Mammary epithelial cell (primary cell): ENCODE measurements at regions of chr3 and their contacts with region 1.

Region 1: DNA sequence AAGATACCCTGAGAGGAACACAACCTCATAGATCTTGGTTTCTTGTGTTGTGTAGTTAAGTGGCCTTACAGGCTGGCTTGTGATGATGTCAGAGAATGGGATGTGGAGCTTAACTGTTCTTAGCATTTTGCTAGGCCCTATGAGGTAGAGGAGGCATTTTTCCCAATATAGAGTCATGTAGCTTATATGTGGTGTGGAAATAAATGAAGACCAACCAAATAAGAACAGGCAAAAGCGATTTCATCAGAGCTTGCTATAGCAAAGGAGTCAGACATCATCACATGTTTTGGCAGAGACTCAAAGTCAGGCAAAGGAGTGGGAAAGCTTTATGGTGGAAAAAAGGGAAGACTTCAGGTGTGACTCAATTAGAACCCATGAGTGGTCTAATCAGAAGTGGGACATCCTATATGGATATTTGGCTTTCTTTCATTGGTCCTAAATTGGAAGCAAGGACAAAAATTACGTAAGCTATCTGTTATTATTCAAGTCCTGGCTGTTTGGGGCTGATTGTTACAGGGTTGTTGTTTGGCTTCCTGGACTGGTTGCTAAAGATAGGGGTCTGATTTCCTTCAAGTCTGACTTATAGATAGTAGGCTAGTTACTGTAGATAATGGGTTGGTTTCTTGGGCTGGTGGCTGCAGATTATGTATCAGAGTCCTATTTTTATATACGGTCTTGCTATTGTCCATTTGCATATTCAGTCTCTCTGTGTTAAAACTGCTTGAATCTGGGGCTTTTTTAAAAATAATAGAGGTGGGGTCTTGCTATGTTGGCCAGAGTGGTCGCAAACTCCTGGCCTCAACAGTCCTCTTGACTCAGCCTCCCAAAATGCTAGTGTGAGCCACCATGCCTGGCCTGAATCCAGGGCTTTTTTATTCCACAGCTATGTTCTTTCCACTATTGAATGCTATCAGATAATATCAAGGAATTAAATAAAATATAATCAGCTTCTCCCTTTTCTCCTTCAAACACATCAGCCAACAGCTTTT is 30.3 kb upstream of the SETD2 start:
- DNase-seq: peak; percentile 1
- H3K4me3 ChIP-seq: no peak overlapping the region
- H3K27ac ChIP-seq: no peak overlapping the region
- H3K4me1 ChIP-seq: no peaks in the 10 kb centered on the region
- H3K27me3 ChIP-seq: no peaks in the 10 kb centered on the region
- CTCF ChIP-seq: no peak

Region 2: GRCh38 chr3:47108546-47108945 is 85.6 kb before region 1 on chr3:
- CTCF ChIA-PET with region 1: no interaction called
- dilution Hi-C with region 1: loop called (anchors 5 kb)
- in situ Hi-C with region 1: no loop called
- intact Hi-C with region 1: no loop called
- DNase-seq: no peak
- H3K4me3 ChIP-seq: no peak overlapping the region
- H3K27ac ChIP-seq: no peak overlapping the region
- H3K4me1 ChIP-seq: peaks cover 4% of the 10 kb centered on the region
- H3K27me3 ChIP-seq: no peaks in the 10 kb centered on the region
- CTCF ChIP-seq: no peak